Calu3 (cell line): ENCODE measurements at regions of chr12 and their contacts with region 1.

Region 1: GRCh38 chr12:122399592-122400373 is 22.7 kb downstream of the CLIP1 start:
- DNase-seq: peak; percentile 86
- H3K4me3 Mint-ChIP-seq: peak overlapping the region; percentile 63
- H3K27ac Mint-ChIP-seq: peak overlapping the region; percentile 94
- H3K4me1 Mint-ChIP-seq: peaks cover 35% of the 10 kb centered on the region
- H3K27me3 Mint-ChIP-seq: no peaks in the 10 kb centered on the region
- CTCF ChIP-seq: peak; percentile 70

Region 2: DNA sequence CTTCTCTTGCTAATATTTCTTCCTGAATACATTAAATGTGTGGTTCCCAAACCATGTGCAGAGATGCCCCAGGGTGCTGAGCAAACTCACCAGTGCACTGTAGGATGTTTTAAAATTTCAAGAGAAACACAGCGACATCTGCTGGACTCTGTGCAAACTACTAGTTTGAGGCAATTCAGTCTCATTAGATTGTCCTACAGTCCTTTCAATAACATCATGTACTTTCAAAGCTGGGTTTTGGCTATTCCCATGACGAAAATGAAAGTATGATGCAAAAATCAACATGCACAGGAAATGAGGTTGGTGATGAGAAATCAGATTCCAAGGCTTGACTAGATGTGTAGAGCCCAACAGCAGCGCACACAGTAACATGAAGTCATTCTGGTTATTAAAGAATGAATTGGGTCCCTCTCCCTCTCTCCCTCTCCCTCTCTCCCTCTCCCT is 43.6 kb before region 1 on chr12:
- CTCF ChIA-PET with region 1: no interaction called
- intact Hi-C with region 1: no loop called
- DNase-seq: peak; percentile 45
- H3K4me3 Mint-ChIP-seq: no peak overlapping the region
- H3K27ac Mint-ChIP-seq: no peak overlapping the region
- H3K4me1 Mint-ChIP-seq: no peaks in the 10 kb centered on the region
- H3K27me3 Mint-ChIP-seq: no peaks in the 10 kb centered on the region
- CTCF ChIP-seq: peak; percentile 66

Region 3: DNA sequence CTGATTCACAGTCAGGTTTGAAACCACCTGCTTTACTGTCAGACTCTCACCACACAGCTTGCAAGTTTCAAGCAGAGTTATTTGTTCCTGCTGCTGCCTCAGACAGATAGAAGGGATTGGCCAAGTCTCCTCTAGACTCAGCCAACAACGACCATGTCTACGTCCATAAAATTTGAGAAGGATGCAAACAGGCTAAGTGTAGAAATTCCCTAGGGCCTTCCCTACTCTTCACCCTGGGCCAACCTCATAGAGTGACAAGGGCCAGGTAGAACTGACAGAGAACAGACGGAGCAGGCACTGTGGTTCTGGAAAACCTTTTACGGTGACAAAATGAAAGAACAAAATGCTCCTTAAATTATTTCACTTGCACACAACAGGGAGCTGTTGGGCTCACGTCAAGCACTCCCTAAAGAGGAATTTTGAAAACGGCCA is 16.8 kb before region 1 on chr12:
- CTCF ChIA-PET with region 1: no interaction called
- intact Hi-C with region 1: no loop called
- DNase-seq: no peak
- H3K4me3 Mint-ChIP-seq: no peak overlapping the region
- H3K27ac Mint-ChIP-seq: no peak overlapping the region
- H3K4me1 Mint-ChIP-seq: no peaks in the 10 kb centered on the region
- H3K27me3 Mint-ChIP-seq: no peaks in the 10 kb centered on the region
- CTCF ChIP-seq: no peak

Region 4: GRCh38 chr12:122421821-122422729 is 22.3 kb after region 1 on chr12 and contains the start of gene CLIP1:
- CTCF ChIA-PET with region 1: interaction called, 39 read pairs
- intact Hi-C with region 1: loop called (anchors 1 kb)
- DNase-seq: peak; percentile 87
- H3K4me3 Mint-ChIP-seq: peak within 1 kb of the TSS; percentile 83
- H3K27ac Mint-ChIP-seq: peak within 1 kb of the TSS; percentile 96
- H3K4me1 Mint-ChIP-seq: peaks cover 18% of the 10 kb centered on the region
- H3K27me3 Mint-ChIP-seq: no peaks in the 10 kb centered on the region
- CTCF ChIP-seq: no peak
- total RNA-seq, gene CLIP1: 95.3 and 109 TPM in 2 replicates

Region 5: DNA sequence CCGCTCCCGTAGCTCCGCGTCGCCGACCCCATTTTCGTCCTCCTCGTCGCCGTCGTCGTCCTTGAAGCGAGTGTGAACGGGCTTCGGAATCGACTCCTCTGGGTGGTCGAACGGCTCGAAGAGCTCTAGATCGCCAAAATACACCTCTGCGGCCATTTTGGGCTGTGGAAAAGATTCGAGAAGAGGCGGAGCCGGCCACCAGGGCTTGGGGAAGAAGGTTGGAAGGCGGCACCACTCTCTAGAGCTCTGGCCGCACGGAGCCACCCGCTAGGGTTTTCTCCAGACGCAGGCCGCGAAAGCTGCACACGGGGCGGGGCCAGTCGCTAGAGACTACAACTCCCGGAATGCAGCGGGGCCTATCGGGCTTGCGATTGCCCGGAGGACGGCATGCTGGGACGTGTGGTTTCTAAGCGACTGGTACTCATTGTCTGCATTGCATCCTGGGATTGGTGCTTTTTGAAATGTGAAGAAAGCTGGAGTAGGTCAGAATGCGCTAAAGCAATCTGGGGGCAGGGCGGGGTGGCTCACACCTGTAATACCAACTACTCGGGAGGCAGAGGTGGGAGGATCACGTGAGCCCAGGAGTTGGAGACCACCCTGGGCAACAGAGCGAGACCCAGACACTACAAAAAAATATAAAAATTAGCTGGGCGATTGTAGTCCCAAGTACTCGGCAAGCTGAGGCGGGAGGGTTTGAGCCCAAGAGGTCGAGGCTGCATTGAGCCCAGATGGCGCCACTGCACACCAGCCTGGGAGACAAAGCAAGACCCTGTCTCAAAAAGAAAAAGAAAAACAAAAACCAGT is 101.1 kb after region 1 on chr12 and contains the start of gene ZCCHC8:
- CTCF ChIA-PET with region 1: interaction called, 13 read pairs
- intact Hi-C with region 1: no loop called
- DNase-seq: peak; percentile 98
- H3K4me3 Mint-ChIP-seq: peak within 1 kb of the TSS; percentile 94
- H3K27ac Mint-ChIP-seq: peak within 1 kb of the TSS; percentile 69
- H3K4me1 Mint-ChIP-seq: peaks cover 16% of the 10 kb centered on the region
- H3K27me3 Mint-ChIP-seq: no peaks in the 10 kb centered on the region
- CTCF ChIP-seq: no peak
- total RNA-seq, gene ZCCHC8: 46.6 and 46.8 TPM in 2 replicates